GM12878 (cell line): ENCODE measurements at regions of chr11 and their contacts with region 1.

Region 1: DNA sequence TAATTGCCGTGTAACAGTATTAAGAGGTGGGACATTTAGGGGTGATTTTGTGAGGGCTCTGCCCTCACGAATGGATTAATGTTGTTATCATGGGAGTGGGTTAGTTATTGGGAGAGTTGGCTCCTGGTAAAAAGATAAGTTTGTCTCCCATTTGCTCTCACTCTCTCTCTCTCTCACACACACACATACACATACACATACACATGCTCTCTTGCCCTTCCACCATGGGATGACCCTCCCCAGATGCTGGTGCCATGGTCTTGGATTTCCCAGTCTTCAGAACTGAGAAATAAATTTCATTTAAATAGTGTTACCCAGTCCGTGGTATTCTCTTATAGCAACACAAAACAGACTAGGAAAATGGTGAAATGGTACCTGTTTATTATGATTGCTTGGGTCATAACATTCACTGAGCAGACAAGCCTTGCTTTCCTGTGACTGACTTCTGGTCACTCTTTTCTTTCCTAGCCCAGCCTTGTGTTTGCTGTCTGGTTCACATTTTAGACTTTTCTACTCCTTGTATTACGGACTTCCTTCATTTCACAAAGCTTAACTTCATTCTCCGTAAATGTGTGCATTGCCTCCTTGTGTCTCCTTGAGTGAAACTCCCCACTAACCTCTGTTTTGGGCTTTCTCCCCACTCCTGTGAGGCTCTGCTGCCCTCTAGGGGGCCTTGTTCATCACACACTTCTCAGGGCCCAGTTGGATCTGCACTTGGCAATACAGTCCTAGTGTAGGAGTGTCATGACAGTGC is 206.5 kb upstream of the CTSC start:
- DNase-seq: peak; percentile 73
- ATAC-seq: peak; percentile 100
- H3K4me3 ChIP-seq: no peak overlapping the region
- H3K27ac ChIP-seq: peak overlapping the region; percentile 45
- H3K4me1 ChIP-seq: no peaks in the 10 kb centered on the region
- H3K27me3 ChIP-seq: no peaks in the 10 kb centered on the region
- CTCF ChIP-seq: peak; percentile 94 to 100 (median 99); a peak in 5 of 6 replicates
- EP300 ChIP-seq: no peak
- POLR2A ChIP-seq: no peak
- RAD21 ChIP-seq: peak; percentile 100

Region 2: GRCh38 chr11:87722756-87723565 is 821.1 kb before region 1 on chr11:
- CTCF ChIA-PET with region 1: interaction called, 4 read pairs
- POLR2A ChIA-PET with region 1: no interaction called
- RAD21 ChIA-PET with region 1: interaction called, 3 read pairs
- SMC1A ChIA-PET with region 1: no interaction called
- in situ Hi-C with region 1: loop called (anchors 5 kb)
- intact Hi-C with region 1: loop called (anchors 2 kb)
- DNase-seq: no peak
- ATAC-seq: peak; percentile 80
- H3K4me3 ChIP-seq: no peak overlapping the region
- H3K27ac ChIP-seq: no peak overlapping the region
- H3K4me1 ChIP-seq: no peaks in the 10 kb centered on the region
- H3K27me3 ChIP-seq: no peaks in the 10 kb centered on the region
- CTCF ChIP-seq: peak; percentile 62 to 84 (median 80)
- EP300 ChIP-seq: no peak
- POLR2A ChIP-seq: no peak
- RAD21 ChIP-seq: peak; percentile 51

Region 3: DNA sequence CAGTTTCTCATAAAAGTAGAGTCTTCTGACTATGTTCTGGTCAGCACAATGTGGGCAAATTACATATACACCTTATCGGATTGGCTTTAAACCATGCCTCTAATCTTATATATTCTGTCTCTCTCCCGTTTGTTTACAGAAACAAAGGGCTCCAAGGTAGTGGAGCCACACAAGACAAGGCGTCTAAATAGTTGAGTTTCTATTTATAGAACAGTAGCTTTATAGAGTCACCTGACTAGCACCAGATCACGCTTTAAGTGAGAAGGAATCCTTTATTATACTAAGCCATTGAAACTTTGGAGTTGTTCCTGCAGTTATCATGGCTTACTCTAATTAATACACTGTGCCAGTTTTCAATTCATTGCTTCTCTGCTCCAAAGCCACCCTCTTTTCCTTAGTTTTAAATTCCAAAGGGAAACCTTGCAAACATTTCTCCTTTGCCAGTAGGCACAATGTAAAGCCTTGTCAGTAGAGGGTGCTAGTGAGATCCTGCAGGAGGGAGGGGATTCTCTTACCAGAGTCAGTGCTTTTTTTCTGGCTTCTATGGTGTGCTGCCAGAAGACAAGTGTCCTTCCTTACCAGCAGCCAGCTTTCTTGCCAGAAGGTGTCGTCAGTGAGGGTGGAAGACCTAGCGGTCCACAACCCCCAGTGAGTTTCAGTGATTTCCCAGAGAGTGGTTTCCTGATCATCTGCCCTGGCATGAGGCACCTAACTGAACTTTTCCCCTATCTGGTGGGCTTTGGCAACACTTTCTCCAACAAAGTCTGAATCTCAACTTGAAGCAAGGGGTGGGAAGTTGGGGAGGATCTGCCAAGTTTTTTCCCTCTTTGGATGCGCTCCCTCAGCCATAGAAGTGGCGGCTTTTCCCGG is 440.5 kb before region 1 on chr11:
- CTCF ChIA-PET with region 1: interaction called, 21 read pairs
- POLR2A ChIA-PET with region 1: no interaction called
- RAD21 ChIA-PET with region 1: interaction called, 7 read pairs
- SMC1A ChIA-PET with region 1: interaction called, 14 read pairs
- in situ Hi-C with region 1: loop called (anchors 5 kb)
- intact Hi-C with region 1: loop called (anchors 1 kb)
- DNase-seq: peak; percentile 53
- ATAC-seq: peak; percentile 96
- H3K4me3 ChIP-seq: no peak overlapping the region
- H3K27ac ChIP-seq: no peak overlapping the region
- H3K4me1 ChIP-seq: peaks cover 3% of the 10 kb centered on the region
- H3K27me3 ChIP-seq: no peaks in the 10 kb centered on the region; a peak in 1 of 4 replicates
- CTCF ChIP-seq: peak; percentile 77 to 90 (median 85)
- EP300 ChIP-seq: no peak
- POLR2A ChIP-seq: no peak
- RAD21 ChIP-seq: peak; percentile 83

Region 4: DNA sequence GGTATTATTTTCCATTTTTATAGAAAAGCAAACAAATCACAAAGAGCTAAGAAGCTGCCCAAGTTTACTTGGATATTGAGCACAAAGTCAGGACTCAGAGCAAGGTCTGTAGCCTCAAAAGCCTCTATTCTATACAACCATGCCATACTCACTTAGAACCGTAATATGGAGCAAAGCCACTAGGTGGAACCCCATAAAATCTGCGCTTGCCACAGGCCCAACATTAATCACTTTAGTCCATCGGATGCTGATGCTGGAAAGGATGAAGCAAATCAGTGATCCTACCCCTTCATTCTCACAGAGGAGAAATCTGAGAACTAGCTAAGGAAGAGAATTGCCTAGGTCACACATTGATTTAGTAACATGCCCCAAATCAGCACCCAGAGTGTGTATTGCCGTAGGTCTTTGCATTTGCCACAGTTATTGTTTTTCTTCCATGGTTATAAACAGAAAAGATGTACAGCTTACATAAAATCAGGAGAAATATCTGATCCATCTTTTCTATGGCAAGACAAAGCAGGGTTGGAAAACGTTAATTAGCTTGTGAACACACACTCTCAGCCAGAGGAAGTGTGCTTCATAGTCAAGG is 312.1 kb before region 1 on chr11:
- CTCF ChIA-PET with region 1: interaction called, 8 read pairs
- POLR2A ChIA-PET with region 1: no interaction called
- RAD21 ChIA-PET with region 1: interaction called, 25 read pairs
- SMC1A ChIA-PET with region 1: interaction called, 5 read pairs
- in situ Hi-C with region 1: no loop called
- intact Hi-C with region 1: loop called (anchors 1 kb)
- DNase-seq: no peak
- ATAC-seq: peak; percentile 97
- H3K4me3 ChIP-seq: no peak overlapping the region
- H3K27ac ChIP-seq: no peak overlapping the region
- H3K4me1 ChIP-seq: no peaks in the 10 kb centered on the region
- H3K27me3 ChIP-seq: no peaks in the 10 kb centered on the region
- CTCF ChIP-seq: peak; percentile 45 to 68 (median 62)
- EP300 ChIP-seq: no peak
- POLR2A ChIP-seq: no peak
- RAD21 ChIP-seq: peak; percentile 76

Region 5: DNA sequence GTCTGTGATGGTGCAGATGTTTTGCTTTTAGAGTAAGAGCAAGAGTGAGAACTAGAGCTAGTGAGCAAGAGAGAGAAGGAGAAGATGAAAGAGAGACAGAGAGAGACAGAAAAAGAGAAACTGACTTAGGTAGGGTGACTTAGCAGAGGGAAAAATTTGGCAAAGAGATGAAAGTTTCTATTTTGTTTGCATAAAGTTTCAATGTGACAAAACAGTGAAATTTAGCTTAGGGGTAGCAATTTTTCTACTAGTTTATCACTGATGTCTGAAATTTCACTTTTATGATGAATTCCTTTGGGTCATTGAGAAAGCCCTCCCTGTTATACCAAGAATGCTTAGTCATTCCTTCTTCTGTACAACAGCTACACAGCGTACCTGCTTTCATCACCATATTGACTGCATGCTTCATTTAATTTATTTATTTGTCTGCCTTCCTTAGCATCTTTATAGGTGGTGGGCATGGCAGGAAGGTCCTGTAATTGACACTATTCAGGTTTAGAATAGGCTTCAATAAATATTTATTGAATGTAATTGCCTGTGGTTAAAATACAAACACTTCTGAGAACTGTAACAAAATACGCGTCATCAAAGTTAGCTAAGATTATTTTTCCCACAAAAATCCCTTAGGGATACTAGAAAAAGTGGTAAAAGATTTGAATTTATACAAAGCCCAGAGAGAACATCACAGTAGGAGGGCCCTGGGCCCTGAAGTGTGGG is 186.6 kb before region 1 on chr11:
- CTCF ChIA-PET with region 1: interaction called, 4 read pairs
- POLR2A ChIA-PET with region 1: no interaction called
- RAD21 ChIA-PET with region 1: interaction called, 4 read pairs
- SMC1A ChIA-PET with region 1: interaction called, 8 read pairs
- in situ Hi-C with region 1: no loop called
- intact Hi-C with region 1: loop called (anchors 5 kb)
- DNase-seq: peak; percentile 79
- ATAC-seq: peak; percentile 62
- H3K4me3 ChIP-seq: peak overlapping the region; percentile 23; the same call in 1 of the 2 replicates
- H3K27ac ChIP-seq: peak overlapping the region; percentile 89
- H3K4me1 ChIP-seq: peaks cover 53% of the 10 kb centered on the region
- H3K27me3 ChIP-seq: no peaks in the 10 kb centered on the region
- CTCF ChIP-seq: no peak
- EP300 ChIP-seq: peak; percentile 63 to 78
- POLR2A ChIP-seq: no peak
- RAD21 ChIP-seq: no peak